HCT116 (cell line): ENCODE measurements at regions of chr11 and their contacts with region 1.

Region 1: GRCh38 chr11:8566613-8567210 is 27.3 kb downstream of the STK33 start:
- DNase-seq: peak; percentile 23
- ATAC-seq: peak; percentile 87
- H3K4me3 ChIP-seq: no peak overlapping the region
- H3K27ac ChIP-seq: no peak overlapping the region
- H3K4me1 ChIP-seq: peaks cover 14 to 17% of the 10 kb centered on the region in 2 experiments
- H3K27me3 ChIP-seq: no peaks in the 10 kb centered on the region
- CTCF ChIP-seq: peak; percentile 28 to 86 (median 75)
- POLR2A ChIP-seq: no peak
- RAD21 ChIP-seq: peak; percentile 88

Region 2: GRCh38 chr11:8099291-8099899 is 467.3 kb before region 1 on chr11:
- CTCF ChIA-PET with region 1: interaction called, 14 read pairs
- POLR2A ChIA-PET with region 1: no interaction called
- RAD21 ChIA-PET with region 1: no interaction called
- intact Hi-C with region 1: no loop called
- DNase-seq: peak; percentile 68
- ATAC-seq: peak; percentile 94
- H3K4me3 ChIP-seq: no peak overlapping the region
- H3K27ac ChIP-seq: no peak overlapping the region
- H3K4me1 ChIP-seq: no peaks in the 10 kb centered on the region
- H3K27me3 ChIP-seq: no peaks in the 10 kb centered on the region
- CTCF ChIP-seq: peak; percentile 79 to 90 (median 84)
- POLR2A ChIP-seq: no peak
- RAD21 ChIP-seq: peak; percentile 90

Region 3: GRCh38 chr11:8219257-8220021 is 347.3 kb before region 1 on chr11:
- CTCF ChIA-PET with region 1: interaction called, 27 read pairs
- POLR2A ChIA-PET with region 1: no interaction called
- RAD21 ChIA-PET with region 1: interaction called in 1 of 2 experiments, 3 read pairs
- intact Hi-C with region 1: no loop called
- DNase-seq: peak; percentile 50
- ATAC-seq: peak; percentile 97
- H3K4me3 ChIP-seq: no peak overlapping the region
- H3K27ac ChIP-seq: no peak overlapping the region
- H3K4me1 ChIP-seq: no peaks in the 10 kb centered on the region
- H3K27me3 ChIP-seq: no peaks in the 10 kb centered on the region
- CTCF ChIP-seq: peak; percentile 46 to 88 (median 73); a peak in 5 of 6 replicates
- POLR2A ChIP-seq: no peak
- RAD21 ChIP-seq: peak; percentile 61

Region 4: GRCh38 chr11:8233691-8234424 is 332.9 kb before region 1 on chr11:
- CTCF ChIA-PET with region 1: interaction called, 11 read pairs
- POLR2A ChIA-PET with region 1: interaction called, 4 read pairs
- RAD21 ChIA-PET with region 1: no interaction called
- intact Hi-C with region 1: no loop called
- DNase-seq: no peak
- ATAC-seq: peak; percentile 46
- H3K4me3 ChIP-seq: no peak overlapping the region
- H3K27ac ChIP-seq: no peak overlapping the region; the same call in 1 of the 2 replicates
- H3K4me1 ChIP-seq: peaks cover 9 to 14% of the 10 kb centered on the region in 2 experiments; a peak in 3 of 4 replicates
- H3K27me3 ChIP-seq: no peaks in the 10 kb centered on the region
- CTCF ChIP-seq: no peak
- POLR2A ChIP-seq: no peak
- RAD21 ChIP-seq: no peak

Region 5: GRCh38 chr11:8328848-8329330 is 237.8 kb before region 1 on chr11:
- CTCF ChIA-PET with region 1: interaction called, 9 read pairs
- POLR2A ChIA-PET with region 1: no interaction called
- RAD21 ChIA-PET with region 1: interaction called in 1 of 2 experiments, 3 read pairs
- intact Hi-C with region 1: loop called (anchors 2 kb)
- DNase-seq: peak; percentile 89
- ATAC-seq: peak; percentile 97
- H3K4me3 ChIP-seq: peak overlapping the region; percentile 42 to 56
- H3K27ac ChIP-seq: peak overlapping the region; percentile 39; the same call in 1 of the 2 replicates
- H3K4me1 ChIP-seq: peaks cover 6 to 16% of the 10 kb centered on the region in 2 experiments
- H3K27me3 ChIP-seq: no peaks in the 10 kb centered on the region
- CTCF ChIP-seq: peak; percentile 75 to 97 (median 97); a peak in 5 of 6 replicates
- POLR2A ChIP-seq: no peak
- RAD21 ChIP-seq: peak; percentile 69

Region 6: GRCh38 chr11:8584511-8584910 is 17.8 kb after region 1 on chr11:
- CTCF ChIA-PET with region 1: interaction called, 10 read pairs
- POLR2A ChIA-PET with region 1: no interaction called
- RAD21 ChIA-PET with region 1: no interaction called
- intact Hi-C with region 1: no loop called
- DNase-seq: no peak
- ATAC-seq: peak; percentile 32
- H3K4me3 ChIP-seq: no peak overlapping the region
- H3K27ac ChIP-seq: no peak overlapping the region
- H3K4me1 ChIP-seq: no peaks in the 10 kb centered on the region
- H3K27me3 ChIP-seq: no peaks in the 10 kb centered on the region
- CTCF ChIP-seq: no peak
- POLR2A ChIP-seq: no peak
- RAD21 ChIP-seq: no peak

Region 7: DNA sequence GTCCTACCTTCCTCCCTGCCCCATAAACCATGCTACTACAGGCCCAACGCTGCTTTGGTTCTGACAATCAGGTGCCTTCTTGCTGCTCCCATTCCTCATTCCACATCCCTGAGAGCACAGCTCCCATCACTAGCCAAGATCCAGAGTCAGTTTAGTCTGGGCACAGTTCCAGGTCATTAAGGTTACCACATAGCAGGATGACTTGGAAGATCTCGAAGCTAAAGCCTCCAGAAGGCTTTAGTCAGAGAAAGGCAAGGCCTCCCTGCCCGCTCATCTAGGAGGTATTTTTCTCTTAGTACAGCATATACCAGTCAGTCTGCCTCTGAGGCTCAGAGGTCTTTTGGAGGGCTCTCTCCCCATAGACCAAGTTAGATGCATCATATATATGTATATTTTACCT is 85.4 kb after region 1 on chr11:
- CTCF ChIA-PET with region 1: no interaction called
- POLR2A ChIA-PET with region 1: no interaction called
- RAD21 ChIA-PET with region 1: no interaction called
- intact Hi-C with region 1: no loop called
- DNase-seq: no peak
- ATAC-seq: no peak; the same call in 1 of the 2 replicates
- H3K4me3 ChIP-seq: no peak overlapping the region
- H3K27ac ChIP-seq: no peak overlapping the region
- H3K4me1 ChIP-seq: no peaks in the 10 kb centered on the region
- H3K27me3 ChIP-seq: no peaks in the 10 kb centered on the region
- CTCF ChIP-seq: no peak
- POLR2A ChIP-seq: no peak
- RAD21 ChIP-seq: no peak